ENCODE measurements at regions of chr4 and their contacts with region 1.

Region 1: DNA sequence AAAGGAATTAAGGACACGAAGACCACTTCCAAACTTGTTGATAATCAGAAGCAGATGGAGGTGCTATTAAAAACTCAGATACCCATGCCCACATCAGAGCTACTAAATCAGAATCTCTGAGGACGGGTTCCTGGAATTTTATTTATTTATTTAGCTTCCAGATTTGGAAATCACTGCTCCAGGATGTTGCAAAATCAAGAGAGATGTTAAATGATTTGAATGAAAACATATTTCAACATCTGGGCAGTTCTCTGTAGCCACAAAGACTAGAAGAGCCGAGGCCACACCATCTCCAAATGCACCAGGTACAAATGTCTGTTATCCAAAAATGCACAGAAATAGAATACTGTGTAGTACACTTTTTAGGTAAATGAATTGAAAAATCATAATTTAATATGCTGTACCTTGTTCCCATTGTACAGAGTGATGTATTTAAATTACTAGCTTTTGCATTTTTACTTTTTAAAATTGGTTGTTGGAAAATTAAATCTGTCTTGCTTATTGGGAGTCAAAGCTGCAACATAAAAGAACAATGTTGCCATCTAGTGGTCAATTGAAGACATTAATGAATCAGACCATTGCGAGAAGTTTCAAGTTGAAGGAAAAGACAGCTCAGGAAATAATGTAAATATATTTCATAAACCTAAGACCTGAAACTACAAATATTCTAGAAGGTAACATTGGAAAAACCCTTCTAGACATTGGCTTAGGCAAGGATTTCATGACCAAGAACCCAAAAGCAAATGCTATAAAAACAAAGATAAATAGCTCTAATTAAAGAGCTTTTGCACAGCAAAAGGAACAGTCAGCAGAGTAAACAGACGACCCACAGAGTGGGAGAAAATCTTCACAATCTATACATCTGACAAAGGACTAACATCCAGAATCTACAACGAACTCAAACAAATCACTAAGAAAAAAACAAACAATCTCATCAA is 151.3 kb upstream of the TTC29 start:
- DNase-seq: no peak
- H3K4me3 Mint-ChIP-seq: no peak overlapping the region
- H3K27ac Mint-ChIP-seq: no peak overlapping the region
- H3K4me1 Mint-ChIP-seq: no peaks in the 10 kb centered on the region
- H3K27me3 Mint-ChIP-seq: no peaks in the 10 kb centered on the region

Region 2: DNA sequence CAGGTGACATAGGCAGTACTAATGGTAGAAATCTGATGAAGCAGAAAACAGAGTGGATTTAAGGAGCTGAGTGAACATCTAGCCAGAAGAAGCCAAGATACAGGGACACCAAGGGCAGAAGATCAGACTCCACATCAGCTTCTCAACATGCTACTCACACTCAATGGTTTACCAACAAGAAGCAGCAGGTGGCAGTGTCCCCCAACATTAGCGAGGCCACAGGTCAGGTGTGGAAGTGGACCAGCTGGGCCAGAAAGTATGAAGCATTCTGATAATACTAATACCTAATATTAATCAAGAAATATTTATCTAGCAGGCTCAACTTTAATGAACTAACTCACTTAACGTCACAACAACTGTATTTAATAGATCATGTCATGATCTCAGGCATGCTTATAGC is 77.9 kb before region 1 on chr4:
- CTCF ChIA-PET with region 1: interaction called, 86 read pairs
- DNase-seq: peak; percentile 67
- H3K4me3 Mint-ChIP-seq: no peak overlapping the region
- H3K27ac Mint-ChIP-seq: no peak overlapping the region
- H3K4me1 Mint-ChIP-seq: no peaks in the 10 kb centered on the region
- H3K27me3 Mint-ChIP-seq: no peaks in the 10 kb centered on the region